PC-3 (cell line): ENCODE measurements at regions of chr11 and their contacts with region 1.

Region 1: GRCh38 chr11:84608837-84609196 is 1018.3 kb downstream of the DLG2 start:
- DNase-seq: no peak
- ATAC-seq: no peak
- H3K4me3 ChIP-seq: no peak overlapping the region
- H3K27ac ChIP-seq: no peak overlapping the region
- H3K4me1 ChIP-seq: no peaks in the 10 kb centered on the region
- H3K27me3 ChIP-seq: peaks cover 4% of the 10 kb centered on the region; the same call in 1 of the 2 replicates
- CTCF ChIP-seq: no peak

Region 2: DNA sequence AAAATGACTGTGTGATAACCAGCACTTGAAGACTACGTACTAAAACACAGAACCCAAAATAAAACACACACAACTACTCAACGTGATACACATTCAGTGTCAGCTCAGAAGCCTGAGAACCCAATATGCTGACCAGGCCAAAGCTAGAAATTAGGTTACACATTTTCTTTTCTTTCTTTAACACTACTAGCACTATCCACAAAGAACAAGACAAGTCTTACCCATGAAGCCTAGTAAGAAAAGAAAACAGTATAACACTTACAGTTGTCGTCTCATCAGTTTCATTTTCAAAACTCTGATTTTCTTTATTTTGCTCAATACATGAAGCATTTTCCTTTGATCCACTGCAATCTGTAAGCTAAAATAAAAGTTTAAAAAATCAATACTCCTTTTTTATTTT is 545.5 kb after region 1 on chr11:
- CTCF ChIA-PET with region 1: interaction called, 13 read pairs
- POLR2A ChIA-PET with region 1: no interaction called
- intact Hi-C with region 1: no loop called
- DNase-seq: no peak
- ATAC-seq: no peak
- H3K4me3 ChIP-seq: no peak overlapping the region
- H3K27ac ChIP-seq: no peak overlapping the region
- H3K4me1 ChIP-seq: no peaks in the 10 kb centered on the region
- H3K27me3 ChIP-seq: no peaks in the 10 kb centered on the region
- CTCF ChIP-seq: no peak